ENCODE measurements at regions of chr1 and their contacts with region 1.

Region 1: DNA sequence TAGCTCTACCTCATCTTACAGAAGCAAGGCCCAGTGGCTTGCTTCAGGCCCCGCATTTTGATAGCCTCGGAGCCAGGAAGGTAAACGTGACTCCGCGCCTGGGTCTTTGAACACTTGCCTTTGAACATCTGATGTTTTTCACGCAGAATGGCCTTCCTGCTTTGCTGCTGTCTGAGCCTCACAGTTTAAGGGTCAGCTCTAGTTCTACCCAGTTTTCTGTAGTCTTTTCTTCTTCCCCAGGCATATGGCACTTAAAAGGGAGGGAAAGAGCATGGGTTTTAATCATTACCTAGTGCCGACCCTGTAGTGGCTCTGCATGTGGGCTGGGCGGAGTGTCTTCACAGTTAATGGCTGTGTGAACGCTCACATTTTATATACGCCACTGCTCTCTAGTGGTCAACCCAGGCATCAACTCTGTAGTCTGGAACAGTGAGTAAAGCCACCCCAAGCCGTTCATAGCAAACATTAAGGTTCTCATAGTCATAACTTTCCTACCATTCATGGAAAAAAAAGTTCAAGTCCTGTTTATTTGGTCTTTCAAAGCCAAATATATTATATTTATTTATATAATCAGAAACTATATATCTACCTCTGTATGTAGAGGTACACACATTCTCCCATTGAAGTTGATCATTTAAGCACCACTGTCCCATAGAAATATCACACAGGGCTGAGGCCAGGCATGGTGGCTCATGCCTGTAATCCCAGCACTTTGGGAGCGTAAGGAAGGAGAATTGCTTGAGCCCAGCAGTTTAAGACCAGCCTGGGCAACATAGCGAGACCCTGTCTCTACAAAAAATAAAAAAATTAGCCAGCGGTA is 78.1 kb downstream of the IER5 start:
- DNase-seq: peak; percentile 93
- H3K4me3 Mint-ChIP-seq: peak overlapping the region; percentile 8
- H3K27ac Mint-ChIP-seq: no peak overlapping the region
- H3K4me1 Mint-ChIP-seq: peaks cover 3% of the 10 kb centered on the region
- H3K27me3 Mint-ChIP-seq: peaks cover 11% of the 10 kb centered on the region

Region 2: DNA sequence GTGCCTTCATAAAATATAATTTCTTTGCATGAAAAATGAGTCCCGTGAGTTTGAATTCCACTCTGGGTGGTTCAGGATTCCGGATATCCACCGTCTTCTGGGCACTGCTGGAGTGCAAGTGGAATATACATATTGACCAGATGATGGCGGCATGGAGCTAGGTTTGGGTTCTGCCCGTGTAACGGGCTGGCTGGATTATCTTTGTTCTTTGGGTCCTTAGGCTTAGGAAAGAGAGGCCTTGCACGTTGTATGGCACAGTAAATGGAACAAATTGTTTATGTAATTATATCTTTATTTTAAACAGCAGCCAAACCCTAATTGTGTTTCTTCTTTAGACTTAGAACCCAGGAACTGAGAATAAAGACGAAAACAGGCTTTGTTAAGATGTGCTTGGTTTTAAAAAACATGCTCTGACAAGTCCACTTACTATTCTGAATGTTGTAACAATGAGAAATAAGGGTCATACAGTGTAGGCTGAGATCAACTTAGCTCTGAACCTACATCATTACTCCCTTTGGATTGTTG is 650.7 kb before region 1 on chr1:
- intact Hi-C with region 1: loop called (anchors 1 kb)
- DNase-seq: peak; percentile 89
- H3K4me3 Mint-ChIP-seq: no peak overlapping the region
- H3K27ac Mint-ChIP-seq: no peak overlapping the region
- H3K4me1 Mint-ChIP-seq: no peaks in the 10 kb centered on the region
- H3K27me3 Mint-ChIP-seq: peaks cover 7% of the 10 kb centered on the region

Region 3: GRCh38 chr1:180533266-180533987 is 633.2 kb before region 1 on chr1:
- intact Hi-C with region 1: loop called (anchors 1 kb)
- DNase-seq: peak; percentile 90
- H3K4me3 Mint-ChIP-seq: no peak overlapping the region
- H3K27ac Mint-ChIP-seq: no peak overlapping the region
- H3K4me1 Mint-ChIP-seq: peaks cover 5% of the 10 kb centered on the region
- H3K27me3 Mint-ChIP-seq: peaks cover 27% of the 10 kb centered on the region

Region 4: DNA sequence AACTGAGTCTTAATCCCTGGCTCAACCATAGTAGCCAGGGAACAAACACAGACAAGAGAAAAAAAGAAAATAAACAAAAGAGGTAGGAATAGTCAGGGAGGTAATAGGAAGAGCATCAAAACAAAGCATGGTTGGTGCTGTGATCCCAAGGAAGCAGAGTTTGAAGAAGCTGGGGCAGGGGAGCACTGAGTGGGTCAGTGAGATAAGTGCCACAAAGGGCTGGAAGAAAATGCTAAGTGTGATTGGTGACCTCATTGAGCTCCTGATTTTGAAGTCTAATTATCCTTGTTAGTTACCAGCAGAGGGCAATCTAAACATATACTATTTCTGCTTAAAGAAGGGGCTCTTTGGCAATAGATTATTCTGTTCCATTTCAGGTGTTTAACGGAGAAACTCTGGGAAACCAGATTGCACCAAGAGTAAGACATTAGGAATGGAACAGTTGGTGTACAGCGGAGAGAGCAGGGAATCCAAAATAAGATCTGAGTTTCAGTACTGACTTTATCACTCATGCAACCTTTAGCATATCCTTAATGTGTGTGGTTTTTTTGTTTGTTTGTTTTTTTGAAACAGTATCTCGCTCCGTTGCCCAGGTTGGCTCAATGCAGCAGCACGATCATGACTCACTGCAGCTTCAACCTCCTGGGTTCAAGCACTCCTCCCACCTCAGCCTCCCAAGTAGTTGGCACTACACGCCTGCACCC is 284.6 kb before region 1 on chr1:
- intact Hi-C with region 1: loop called (anchors 1 kb)
- DNase-seq: no peak
- H3K4me3 Mint-ChIP-seq: no peak overlapping the region
- H3K27ac Mint-ChIP-seq: no peak overlapping the region
- H3K4me1 Mint-ChIP-seq: peaks cover 3% of the 10 kb centered on the region
- H3K27me3 Mint-ChIP-seq: no peaks in the 10 kb centered on the region

Region 5: DNA sequence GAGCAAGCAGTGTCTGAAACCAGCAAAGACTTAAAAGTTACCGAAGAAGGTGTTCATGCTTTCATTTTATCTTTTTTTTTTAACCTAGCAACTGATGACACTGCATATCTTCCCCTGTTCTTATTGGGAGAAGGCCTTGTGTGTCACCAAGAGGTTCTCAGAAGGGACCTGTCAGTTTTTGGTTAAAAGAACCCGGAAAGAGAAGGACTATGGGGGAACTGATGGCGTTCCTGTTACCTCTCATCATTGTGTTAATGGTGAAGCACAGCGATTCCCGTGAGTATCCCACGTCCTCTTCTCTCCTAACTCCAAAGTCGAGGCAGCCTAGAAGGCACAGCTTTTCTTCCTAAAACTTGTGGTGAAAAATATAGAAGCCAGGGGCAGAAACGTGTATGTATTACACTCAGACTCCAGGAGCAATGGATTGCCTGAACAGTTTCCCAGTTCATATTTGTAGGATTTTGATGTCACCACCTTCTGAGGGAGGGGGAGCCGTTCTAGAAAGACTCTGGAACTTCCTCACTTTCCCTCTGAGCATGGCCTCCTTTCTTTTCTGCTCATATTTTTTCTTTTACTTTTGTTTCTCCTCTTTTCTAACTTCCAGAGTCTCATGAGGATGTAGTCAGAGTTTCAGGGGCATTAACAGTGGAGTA is 132.7 kb before region 1 on chr1 and contains the start of gene MR1:
- intact Hi-C with region 1: loop called (anchors 1 kb)
- DNase-seq: peak; percentile 88
- H3K4me3 Mint-ChIP-seq: peak within 1 kb of the TSS; percentile 96
- H3K27ac Mint-ChIP-seq: peak within 1 kb of the TSS; percentile 97
- H3K4me1 Mint-ChIP-seq: peaks cover 51% of the 10 kb centered on the region
- H3K27me3 Mint-ChIP-seq: peaks cover 5% of the 10 kb centered on the region
- total RNA-seq, gene MR1: 14.6 and 16.2 TPM in 2 replicates

Region 6: DNA sequence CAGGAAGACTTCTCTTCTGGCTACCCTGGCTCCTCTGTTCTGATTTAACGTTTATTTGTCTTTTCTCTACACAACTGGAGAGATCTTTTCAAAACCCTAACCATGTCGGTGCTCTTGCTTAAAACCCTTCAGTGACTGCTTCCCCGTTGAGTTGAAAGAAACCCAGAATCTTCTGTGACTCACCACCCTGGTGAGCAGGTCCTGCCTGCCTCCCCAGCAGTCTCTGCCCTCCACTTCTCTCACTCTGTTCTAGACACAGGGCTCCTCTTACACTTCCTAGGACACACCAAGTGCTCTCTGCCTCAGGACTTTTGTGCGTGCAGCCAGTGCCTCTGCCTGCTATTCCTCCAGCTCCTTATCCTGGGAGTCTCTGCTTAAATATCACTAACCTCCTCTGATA is 53.4 kb after region 1 on chr1:
- intact Hi-C with region 1: no loop called
- DNase-seq: no peak
- H3K4me3 Mint-ChIP-seq: no peak overlapping the region
- H3K27ac Mint-ChIP-seq: no peak overlapping the region
- H3K4me1 Mint-ChIP-seq: no peaks in the 10 kb centered on the region
- H3K27me3 Mint-ChIP-seq: peaks cover 2% of the 10 kb centered on the region

Measured in activated CD4-positive, alpha-beta T cell treated with anti-CD3 and anti-CD28 coated beads, Interleukin-2, amount 10 ng/mL, durations not matched to agents 24 days and 14 days (primary cell).